ENCODE measurements at regions of chr2 and their contacts with region 1.

Region 1: GRCh38 chr2:182463760-182464159 is 36.9 kb upstream of the PDE1A start:
- DNase-seq: peak in 1 of 2 donors; percentile 47
- ATAC-seq: peak; percentile 74 to 99 (median 95)
- H3K4me3 ChIP-seq: no peak overlapping the region
- H3K27ac ChIP-seq: peak overlapping the region in 3 of 10 donors; percentile 46 to 57 (median 49)
- H3K4me1 ChIP-seq: peaks cover 0 to 8% (median 0%) of the 10 kb centered on the region in 9 donors
- H3K27me3 ChIP-seq: no peaks in the 10 kb centered on the region
- CTCF ChIP-seq: no peak

Region 2: DNA sequence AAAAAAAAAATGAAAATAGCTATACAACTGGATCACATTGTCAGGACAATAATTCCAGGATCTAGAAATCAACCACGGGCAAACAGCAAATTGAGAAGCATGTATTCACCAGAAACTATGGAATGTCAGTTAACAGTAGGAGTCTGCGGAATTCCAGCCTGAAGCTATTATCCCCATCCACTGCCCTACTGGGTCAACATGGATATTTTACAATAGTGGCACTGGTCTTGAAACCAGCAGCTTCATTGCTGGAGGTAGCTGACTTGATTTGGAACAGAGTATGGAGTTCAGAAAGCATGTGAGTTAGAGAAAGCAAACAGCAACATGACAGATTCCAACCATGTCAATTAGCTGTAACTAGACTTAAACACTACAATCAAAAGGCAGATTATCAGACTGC is 18.8 kb after region 1 on chr2:
- intact Hi-C with region 1: no loop called
- DNase-seq: no peak
- ATAC-seq: no peak
- H3K4me3 ChIP-seq: no peak overlapping the region
- H3K27ac ChIP-seq: no peak overlapping the region
- H3K4me1 ChIP-seq: no peaks in the 10 kb centered on the region
- H3K27me3 ChIP-seq: no peaks in the 10 kb centered on the region
- CTCF ChIP-seq: no peak

Region 3: GRCh38 chr2:182530636-182531035 is 66.9 kb after region 1 on chr2:
- intact Hi-C with region 1: no loop called
- DNase-seq: no peak
- ATAC-seq: no peak
- H3K4me3 ChIP-seq: no peak overlapping the region
- H3K27ac ChIP-seq: no peak overlapping the region
- H3K4me1 ChIP-seq: no peaks in the 10 kb centered on the region
- H3K27me3 ChIP-seq: no peaks in the 10 kb centered on the region
- CTCF ChIP-seq: no peak

Region 4: DNA sequence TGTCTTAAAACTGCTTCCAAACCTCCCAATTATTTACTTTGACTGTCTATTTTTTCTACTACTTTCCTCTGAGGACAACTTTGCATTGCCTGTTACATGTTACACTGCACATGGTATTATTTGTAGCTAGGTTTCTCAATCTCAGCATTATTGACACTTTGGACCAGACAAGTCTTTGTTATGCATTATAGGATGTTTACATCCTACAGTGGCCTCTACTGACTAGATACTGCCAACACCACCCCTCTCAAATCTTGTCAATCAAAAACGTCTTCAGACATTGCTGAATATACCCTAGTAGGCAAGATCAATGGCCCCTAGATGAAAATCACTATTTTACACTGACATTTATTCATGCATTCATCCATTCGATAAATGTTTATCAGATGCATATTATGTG is 122.7 kb after region 1 on chr2:
- intact Hi-C with region 1: loop called in 2 of 10 experiments (anchors 10 kb)
- DNase-seq: no peak
- ATAC-seq: no peak
- H3K4me3 ChIP-seq: no peak overlapping the region
- H3K27ac ChIP-seq: no peak overlapping the region
- H3K4me1 ChIP-seq: no peaks in the 10 kb centered on the region
- H3K27me3 ChIP-seq: no peaks in the 10 kb centered on the region
- CTCF ChIP-seq: no peak